ENCODE measurements at regions of chr1 and their contacts with region 1.

Region 1: GRCh38 chr1:100866041-100866900 is 28.4 kb downstream of the EXTL2 start:
- DNase-seq: no peak
- H3K4me3 ChIP-seq: no peak overlapping the region
- H3K27me3 ChIP-seq: no peaks in the 10 kb centered on the region; the same call in 1 of the 2 replicates
- CTCF ChIP-seq: peak; percentile 48

Region 2: DNA sequence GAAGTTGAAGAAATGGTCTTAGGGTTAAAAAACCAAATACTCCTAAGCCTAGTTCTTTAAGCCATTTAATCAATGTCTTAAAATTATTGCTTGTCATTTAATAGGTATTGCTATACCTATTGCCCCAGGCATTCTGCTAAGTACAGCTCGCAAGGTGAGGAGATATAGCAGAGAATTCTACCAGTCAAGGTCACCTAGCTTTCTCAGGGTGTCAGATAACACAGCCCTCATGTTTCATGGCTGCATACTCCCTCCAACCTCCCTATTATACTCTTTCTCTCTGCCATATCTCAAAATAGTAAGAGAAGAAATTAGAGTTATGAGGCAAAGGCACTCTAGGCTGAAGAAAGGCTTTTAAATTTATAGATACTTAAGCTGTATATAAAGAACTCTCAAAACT is 396.7 kb before region 1 on chr1:
- CTCF ChIA-PET with region 1: interaction called, 85 read pairs
- POLR2A ChIA-PET with region 1: no interaction called
- DNase-seq: no peak
- H3K4me3 ChIP-seq: no peak overlapping the region
- H3K27me3 ChIP-seq: no peaks in the 10 kb centered on the region
- CTCF ChIP-seq: no peak

Region 3: GRCh38 chr1:100606438-100606837 is 259.8 kb before region 1 on chr1:
- CTCF ChIA-PET with region 1: interaction called, 55 read pairs
- POLR2A ChIA-PET with region 1: interaction called, 4 read pairs
- DNase-seq: no peak
- H3K4me3 ChIP-seq: no peak overlapping the region
- H3K27me3 ChIP-seq: no peaks in the 10 kb centered on the region
- CTCF ChIP-seq: peak; percentile 77

Region 4: DNA sequence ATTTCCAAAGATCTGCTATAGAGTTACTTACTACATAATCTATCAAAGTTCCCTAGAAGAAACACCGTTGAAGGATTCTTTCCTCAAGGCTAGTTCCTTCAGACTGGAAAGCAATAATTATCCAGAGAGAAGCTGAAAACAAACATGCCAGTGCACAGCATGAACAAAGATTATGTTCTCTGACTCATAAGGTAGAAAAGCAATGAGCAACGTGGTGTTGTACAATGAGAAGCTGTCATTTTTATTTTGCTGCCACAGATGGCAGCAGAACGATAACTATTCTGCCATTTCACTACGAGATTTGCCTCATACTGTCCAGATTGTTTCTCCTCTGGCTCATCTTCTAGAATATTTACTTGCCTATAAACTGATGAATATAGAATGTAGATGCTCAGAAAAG is 17.7 kb after region 1 on chr1:
- CTCF ChIA-PET with region 1: interaction called, 40 read pairs
- POLR2A ChIA-PET with region 1: no interaction called
- DNase-seq: no peak
- H3K4me3 ChIP-seq: no peak overlapping the region
- H3K27me3 ChIP-seq: no peaks in the 10 kb centered on the region
- CTCF ChIP-seq: 0 out of 2 replicates have a peak, but pooled peaks have one; percentile 11

Measured in BJ (cell line).